Heart right ventricle (tissue), 16 donors: ENCODE measurements at regions of chr1 and their contacts with region 1.

Region 1: GRCh38 chr1:225777583-225778336 is at the start of gene SRP9:
- DNase-seq: peak; percentile 99
- ATAC-seq: peak; percentile 100
- H3K4me3 ChIP-seq: peak within 1 kb of the TSS; percentile 61 to 97 (median 71)
- H3K27ac ChIP-seq: peak within 1 kb of the TSS; percentile 61 to 97 (median 94)
- H3K4me1 ChIP-seq: peaks cover 6 to 66% (median 55%) of the 10 kb centered on the region in 9 donors
- H3K27me3 ChIP-seq: no peaks in the 10 kb centered on the region
- CTCF ChIP-seq: peak; percentile 85 to 98 (median 92)
- total RNA-seq, gene SRP9: 165 to 199 (median 175) TPM

Region 2: GRCh38 chr1:225428068-225428880 is 349.5 kb before region 1 on chr1:
- intact Hi-C with region 1: no loop called
- DNase-seq: peak; percentile 92 to 93
- ATAC-seq: peak; percentile 96 to 99 (median 97)
- H3K4me3 ChIP-seq: peak overlapping the region; percentile 64 to 98 (median 90)
- H3K27ac ChIP-seq: peak overlapping the region; percentile 47 to 97 (median 90)
- H3K4me1 ChIP-seq: peaks cover 9 to 48% (median 41%) of the 10 kb centered on the region in 9 donors
- H3K27me3 ChIP-seq: no peaks in the 10 kb centered on the region
- CTCF ChIP-seq: no peak

Region 3: GRCh38 chr1:225554216-225554812 is 223.4 kb before region 1 on chr1:
- intact Hi-C with region 1: loop called in 9 of 10 experiments (anchors 2 to 10 kb)
- DNase-seq: no peak
- ATAC-seq: peak in 3 of 8 donors; percentile 38 to 51 (median 42)
- H3K4me3 ChIP-seq: no peak overlapping the region
- H3K27ac ChIP-seq: no peak overlapping the region
- H3K4me1 ChIP-seq: peaks cover 0 to 25% (median 13%) of the 10 kb centered on the region in 9 donors
- H3K27me3 ChIP-seq: no peaks in the 10 kb centered on the region
- CTCF ChIP-seq: peak; percentile 36 to 78 (median 61)

Region 4: GRCh38 chr1:225845571-225846259 is 68.0 kb after region 1 on chr1:
- intact Hi-C with region 1: loop called in 9 of 10 experiments (anchors 5 to 10 kb)
- DNase-seq: peak; percentile 78 to 81
- ATAC-seq: peak; percentile 77 to 88 (median 81)
- H3K4me3 ChIP-seq: no peak overlapping the region
- H3K27ac ChIP-seq: peak overlapping the region in 6 of 10 donors; percentile 12 to 38 (median 24)
- H3K4me1 ChIP-seq: peaks cover 0 to 40% (median 17%) of the 10 kb centered on the region in 9 donors
- H3K27me3 ChIP-seq: no peaks in the 10 kb centered on the region
- CTCF ChIP-seq: peak; percentile 57 to 81 (median 75)

Region 5: DNA sequence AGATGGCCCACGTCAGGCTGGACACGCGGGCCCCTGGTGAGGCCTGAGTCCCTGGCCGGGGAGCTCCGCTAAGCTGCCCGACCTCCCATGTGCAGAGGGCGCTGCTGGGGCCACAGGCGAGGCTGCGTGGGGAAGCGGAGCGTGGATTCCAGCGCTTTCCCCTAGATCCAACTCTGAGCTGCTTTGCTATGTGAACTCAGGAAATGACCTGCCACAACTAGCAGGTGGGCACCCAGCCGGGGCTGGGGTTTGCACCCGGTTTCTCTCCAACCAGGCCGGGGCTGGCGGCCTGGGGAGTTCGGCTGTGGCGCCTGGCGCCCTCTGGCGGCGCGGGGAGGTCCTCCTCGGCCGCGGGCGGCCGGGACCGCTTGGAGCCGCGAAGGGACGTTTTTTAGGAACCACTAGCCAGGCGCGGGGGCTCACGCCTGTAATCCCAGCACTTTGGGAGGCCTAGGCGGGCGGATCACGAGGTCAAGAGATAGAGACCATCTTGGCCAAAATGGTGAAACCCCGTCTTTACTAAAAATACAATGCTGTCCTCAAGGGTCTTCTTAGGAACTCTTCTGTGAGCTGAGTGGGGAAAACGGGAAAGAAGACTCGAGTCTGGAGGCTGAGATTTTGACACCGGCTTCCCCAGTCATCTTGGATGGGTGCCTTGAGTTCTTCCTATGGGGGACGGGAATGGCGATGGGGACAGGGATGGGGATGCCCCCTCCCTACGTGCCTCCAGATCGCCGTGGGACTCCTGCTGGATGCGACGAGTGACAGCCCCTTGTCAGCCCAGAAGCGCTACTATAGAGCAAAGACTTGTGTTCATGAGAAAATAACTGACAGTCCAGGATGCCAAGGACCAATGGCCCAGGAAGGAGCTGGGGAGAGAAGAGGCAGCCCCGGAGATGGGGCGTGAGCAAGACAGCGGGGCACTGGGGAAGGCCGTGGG is 133.7 kb after region 1 on chr1:
- intact Hi-C with region 1: loop called in 8 of 10 experiments (anchors 5 to 10 kb)
- DNase-seq: peak; percentile 50 to 81
- ATAC-seq: peak; percentile 80 to 95 (median 90)
- H3K4me3 ChIP-seq: peak overlapping the region in 5 of 10 donors; percentile 19 to 35 (median 26)
- H3K27ac ChIP-seq: no peak overlapping the region
- H3K4me1 ChIP-seq: peaks cover 0 to 13% (median 4%) of the 10 kb centered on the region in 9 donors
- H3K27me3 ChIP-seq: no peaks in the 10 kb centered on the region
- CTCF ChIP-seq: peak; percentile 88 to 98 (median 96)

Region 6: GRCh38 chr1:225987491-225988316 is 209.9 kb after region 1 on chr1:
- intact Hi-C with region 1: loop called in 1 of 10 experiments (anchors 10 kb)
- DNase-seq: no peak
- ATAC-seq: no peak
- H3K4me3 ChIP-seq: no peak overlapping the region
- H3K27ac ChIP-seq: no peak overlapping the region
- H3K4me1 ChIP-seq: peaks cover 0 to 10% (median 0%) of the 10 kb centered on the region in 9 donors
- H3K27me3 ChIP-seq: no peaks in the 10 kb centered on the region
- CTCF ChIP-seq: peak; percentile 59 to 81 (median 75)